Left colon (tissue), 2 donors: ENCODE measurements at regions of chr20 and their contacts with region 1.

Region 1: DNA sequence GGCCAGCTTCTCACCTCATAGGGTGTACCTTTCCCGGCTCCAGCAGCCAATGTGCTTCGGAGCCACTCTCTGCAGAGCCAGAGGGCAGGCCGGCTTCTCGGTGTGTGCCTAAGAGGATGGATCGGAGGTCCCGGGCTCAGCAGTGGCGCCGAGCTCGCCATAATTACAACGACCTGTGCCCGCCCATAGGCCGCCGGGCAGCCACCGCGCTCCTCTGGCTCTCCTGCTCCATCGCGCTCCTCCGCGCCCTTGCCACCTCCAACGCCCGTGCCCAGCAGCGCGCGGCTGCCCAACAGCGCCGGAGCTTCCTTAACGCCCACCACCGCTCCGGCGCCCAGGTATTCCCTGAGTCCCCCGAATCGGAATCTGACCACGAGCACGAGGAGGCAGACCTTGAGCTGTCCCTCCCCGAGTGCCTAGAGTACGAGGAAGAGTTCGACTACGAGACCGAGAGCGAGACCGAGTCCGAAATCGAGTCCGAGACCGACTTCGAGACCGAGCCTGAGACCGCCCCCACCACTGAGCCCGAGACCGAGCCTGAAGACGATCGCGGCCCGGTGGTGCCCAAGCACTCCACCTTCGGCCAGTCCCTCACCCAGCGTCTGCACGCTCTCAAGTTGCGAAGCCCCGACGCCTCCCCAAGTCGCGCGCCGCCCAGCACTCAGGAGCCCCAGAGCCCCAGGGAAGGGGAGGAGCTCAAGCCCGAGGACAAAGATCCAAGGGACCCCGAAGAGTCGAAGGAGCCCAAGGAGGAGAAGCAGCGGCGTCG is 10.5 kb downstream of the GNAS-AS1 start:
- DNase-seq: no peak
- ATAC-seq: no peak

Region 2: GRCh38 chr20:58650776-58651558 is 189.2 kb before region 1 on chr20 and contains the start of gene STX16:
- intact Hi-C with region 1: loop called in 1 of 2 experiments (anchors 10 kb)
- DNase-seq: peak; percentile 91 to 92
- ATAC-seq: peak; percentile 89
- total RNA-seq, gene STX16: 39.6 to 40.7 TPM